CD8-positive, alpha-beta T cell (primary cell): ENCODE measurements at regions of chr16 and their contacts with region 1.

Region 1: DNA sequence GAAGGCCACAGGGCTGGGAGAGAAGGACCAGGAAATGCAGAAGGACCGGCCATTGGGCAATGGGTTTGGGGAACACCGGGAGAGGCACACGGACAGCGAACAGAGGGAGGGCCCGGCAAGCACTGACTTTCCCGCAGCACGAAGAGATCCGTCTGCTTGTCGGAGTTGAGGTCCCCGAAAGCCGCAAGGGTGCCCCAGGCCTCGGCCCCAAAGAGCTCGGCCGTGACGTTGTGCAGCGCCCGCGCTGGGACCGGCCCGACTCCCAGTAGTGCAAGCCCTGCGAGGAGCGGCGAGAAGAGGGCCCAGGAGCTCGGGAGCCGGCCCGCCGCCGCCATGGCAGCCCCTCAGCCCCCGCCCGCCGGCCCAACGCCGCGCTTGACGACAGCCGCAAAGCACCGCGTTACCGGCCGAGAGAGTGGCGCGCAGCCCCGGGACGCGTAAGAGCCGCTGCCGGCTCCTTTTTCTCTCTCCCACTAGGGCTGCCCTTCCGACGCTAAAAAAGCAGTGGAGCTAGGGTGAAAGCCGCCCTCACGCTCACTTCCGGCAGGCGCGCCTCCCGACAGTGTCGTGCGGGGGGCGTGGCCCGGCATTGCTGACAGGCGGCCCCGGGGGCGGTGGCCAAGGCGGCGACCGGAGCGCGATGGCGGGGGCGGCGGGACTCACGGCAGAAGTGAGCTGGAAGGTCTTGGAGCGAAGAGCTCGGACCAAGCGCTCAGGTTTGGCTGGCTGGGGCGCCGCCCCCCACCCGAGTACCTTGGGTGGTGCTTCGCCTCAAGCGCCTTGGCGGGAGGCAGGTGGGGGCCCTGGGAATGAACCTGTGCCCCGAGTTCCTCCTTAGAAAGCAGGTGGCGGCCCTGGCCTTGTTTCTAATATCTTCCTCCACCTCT is at the starts of genes ITFG1 and PHKB:
- DNase-seq: peak; percentile 91 to 97 (median 95)
- ATAC-seq: peak; percentile 95
- H3K4me3 ChIP-seq: peak within 1 kb of the TSS; percentile 77 to 87
- H3K4me3 Mint-ChIP-seq: peak within 1 kb of the TSS; percentile 99
- H3K27ac ChIP-seq: peak within 1 kb of the TSS; percentile 77 to 95
- H3K27ac Mint-ChIP-seq: peak within 1 kb of the TSS; percentile 95
- H3K4me1 ChIP-seq: peaks cover 33% of the 10 kb centered on the region
- H3K4me1 Mint-ChIP-seq: peaks cover 72% of the 10 kb centered on the region
- H3K27me3 ChIP-seq: no peaks in the 10 kb centered on the region
- H3K27me3 Mint-ChIP-seq: no peaks in the 10 kb centered on the region
- CTCF ChIP-seq: no peak
- total RNA-seq, gene ITFG1: 13.2 to 16.8 TPM
- total RNA-seq, gene PHKB: 32.4 to 32.8 TPM

Region 2: GRCh38 chr16:46830902-46831647 is 629.9 kb before region 1 on chr16 and contains the start of gene C16orf87:
- CTCF ChIA-PET with region 1: no interaction called
- POLR2A ChIA-PET with region 1: no interaction called
- intact Hi-C with region 1: loop called (anchors 2 to 5 kb)
- DNase-seq: peak; percentile 85 to 96 (median 90)
- ATAC-seq: peak; percentile 92
- H3K4me3 ChIP-seq: peak within 1 kb of the TSS; percentile 61 to 74
- H3K4me3 Mint-ChIP-seq: peak within 1 kb of the TSS; percentile 94
- H3K27ac ChIP-seq: peak within 1 kb of the TSS; percentile 62 to 73
- H3K27ac Mint-ChIP-seq: peak within 1 kb of the TSS; percentile 96
- H3K4me1 ChIP-seq: peaks cover 9% of the 10 kb centered on the region
- H3K4me1 Mint-ChIP-seq: peaks cover 27% of the 10 kb centered on the region
- H3K27me3 ChIP-seq: no peaks in the 10 kb centered on the region
- H3K27me3 Mint-ChIP-seq: no peaks in the 10 kb centered on the region
- CTCF ChIP-seq: no peak
- total RNA-seq, gene C16orf87: 13.9 to 14.0 TPM

Region 3: GRCh38 chr16:47141773-47142485 is 319.0 kb before region 1 on chr16:
- CTCF ChIA-PET with region 1: no interaction called
- POLR2A ChIA-PET with region 1: no interaction called
- intact Hi-C with region 1: loop called (anchors 2 to 5 kb)
- DNase-seq: peak; percentile 63 to 87 (median 80)
- ATAC-seq: peak; percentile 77
- H3K4me3 ChIP-seq: peak overlapping the region; percentile 3 to 28
- H3K4me3 Mint-ChIP-seq: peak overlapping the region; percentile 76
- H3K27ac ChIP-seq: no peak overlapping the region
- H3K27ac Mint-ChIP-seq: no peak overlapping the region
- H3K4me1 ChIP-seq: peaks cover 12% of the 10 kb centered on the region
- H3K4me1 Mint-ChIP-seq: peaks cover 21% of the 10 kb centered on the region
- H3K27me3 ChIP-seq: peaks cover 3 to 5% of the 10 kb centered on the region in 2 experiments
- H3K27me3 Mint-ChIP-seq: peaks cover 22% of the 10 kb centered on the region
- CTCF ChIP-seq: peak; percentile 85

Region 4: DNA sequence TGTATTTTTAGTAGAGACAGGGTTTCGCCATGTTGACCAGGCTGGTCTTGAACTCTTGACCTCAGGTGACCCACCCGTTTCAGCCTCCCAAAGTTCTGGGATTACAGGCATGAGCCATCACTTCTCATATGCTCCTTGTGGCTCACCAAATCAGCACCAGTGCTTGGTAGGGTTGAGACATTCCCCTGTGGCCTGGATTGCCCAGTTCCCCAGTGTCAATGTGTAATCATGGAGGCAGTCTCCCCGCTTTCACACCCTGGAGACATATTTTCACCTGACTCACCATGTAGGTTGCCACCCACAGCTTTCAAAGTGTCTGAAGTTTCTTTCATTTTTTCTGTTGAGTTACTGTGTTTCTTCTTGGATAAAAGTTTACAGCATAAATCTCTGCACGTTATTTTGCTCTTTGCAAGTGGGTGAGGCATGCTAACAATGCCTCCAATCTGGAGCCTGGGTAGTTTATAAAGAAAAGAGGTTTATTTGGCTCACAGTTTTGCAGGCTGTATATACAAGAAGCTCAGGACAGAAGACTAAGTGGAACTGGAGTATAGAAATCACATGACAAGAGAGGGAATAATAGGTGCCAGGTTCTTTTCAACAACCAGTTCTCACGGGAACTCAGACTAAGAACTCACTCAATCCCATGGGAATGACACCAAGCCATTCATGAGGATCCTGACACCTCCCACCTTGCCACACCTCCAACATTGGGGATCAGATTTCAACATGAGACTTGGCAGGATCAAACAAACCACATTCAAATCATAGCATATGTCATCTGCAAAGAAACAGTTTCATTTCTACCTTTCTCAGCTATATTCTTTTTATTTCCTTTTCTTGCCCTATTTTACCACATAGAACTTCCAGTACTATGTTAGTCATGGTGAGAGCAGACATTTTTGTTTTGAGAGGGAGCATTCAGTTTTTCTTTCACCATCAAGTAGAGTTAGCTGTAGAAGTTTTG is 113.4 kb after region 1 on chr16:
- CTCF ChIA-PET with region 1: no interaction called
- POLR2A ChIA-PET with region 1: no interaction called
- intact Hi-C with region 1: loop called in 1 of 2 experiments (anchors 5 kb)
- DNase-seq: peak in 2 of 9 experiments; percentile 7 to 33
- ATAC-seq: peak; percentile 68
- H3K4me3 ChIP-seq: no peak overlapping the region
- H3K4me3 Mint-ChIP-seq: peak overlapping the region; percentile 19
- H3K27ac ChIP-seq: no peak overlapping the region
- H3K27ac Mint-ChIP-seq: peak overlapping the region; percentile 72
- H3K4me1 ChIP-seq: peaks cover 21% of the 10 kb centered on the region
- H3K4me1 Mint-ChIP-seq: peaks cover 48% of the 10 kb centered on the region
- H3K27me3 ChIP-seq: no peaks in the 10 kb centered on the region
- H3K27me3 Mint-ChIP-seq: no peaks in the 10 kb centered on the region
- CTCF ChIP-seq: no peak

Region 5: DNA sequence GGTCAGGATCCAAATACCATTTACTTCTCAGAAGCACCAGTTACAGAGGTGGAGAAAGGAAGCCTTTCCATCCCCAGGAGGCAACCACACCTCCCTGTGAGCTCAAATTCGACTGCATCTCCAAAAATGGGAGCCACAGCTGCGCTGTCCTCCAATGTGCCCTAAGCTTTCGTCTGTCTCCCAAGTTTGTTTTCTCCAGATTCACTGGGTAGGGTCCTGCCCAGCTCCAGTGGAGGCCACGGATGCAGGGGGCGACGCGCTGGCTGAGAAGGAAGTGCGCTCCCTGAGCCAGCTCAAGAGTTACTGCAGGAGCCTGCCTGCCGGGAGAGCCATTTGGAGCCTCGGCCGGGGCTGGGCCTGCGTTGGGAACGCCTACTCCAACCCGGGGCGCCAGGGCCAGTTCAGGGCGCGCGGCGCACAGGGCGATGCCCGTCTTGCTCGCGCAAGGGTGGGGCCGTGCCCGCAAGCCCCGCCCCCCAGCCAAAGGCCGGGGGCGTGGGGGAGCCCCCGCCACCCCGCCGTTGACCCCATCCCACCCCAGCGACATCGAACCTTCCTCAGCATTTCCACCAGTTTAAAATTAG is 904.7 kb after region 1 on chr16:
- CTCF ChIA-PET with region 1: no interaction called
- POLR2A ChIA-PET with region 1: no interaction called
- intact Hi-C with region 1: loop called in 1 of 2 experiments (anchors 5 kb)
- DNase-seq: peak; percentile 48 to 83 (median 69)
- ATAC-seq: peak; percentile 85
- H3K4me3 ChIP-seq: peak overlapping the region; percentile 65 to 83
- H3K4me3 Mint-ChIP-seq: peak overlapping the region; percentile 89
- H3K27ac ChIP-seq: peak overlapping the region; percentile 63 to 89
- H3K27ac Mint-ChIP-seq: peak overlapping the region; percentile 97
- H3K4me1 ChIP-seq: peaks cover 25% of the 10 kb centered on the region
- H3K4me1 Mint-ChIP-seq: peaks cover 40% of the 10 kb centered on the region
- H3K27me3 ChIP-seq: no peaks in the 10 kb centered on the region
- H3K27me3 Mint-ChIP-seq: no peaks in the 10 kb centered on the region
- CTCF ChIP-seq: no peak